ENCODE measurements at regions of chr15 and their contacts with region 1.

Region 1: GRCh38 chr15:85618956-85619491 is 175.7 kb downstream of the KLHL25 start:
- DNase-seq: peak; percentile 33
- H3K4me3 Mint-ChIP-seq: no peak overlapping the region
- H3K27ac Mint-ChIP-seq: no peak overlapping the region
- H3K4me1 Mint-ChIP-seq: peaks cover 31% of the 10 kb centered on the region
- H3K27me3 Mint-ChIP-seq: no peaks in the 10 kb centered on the region

Region 2: DNA sequence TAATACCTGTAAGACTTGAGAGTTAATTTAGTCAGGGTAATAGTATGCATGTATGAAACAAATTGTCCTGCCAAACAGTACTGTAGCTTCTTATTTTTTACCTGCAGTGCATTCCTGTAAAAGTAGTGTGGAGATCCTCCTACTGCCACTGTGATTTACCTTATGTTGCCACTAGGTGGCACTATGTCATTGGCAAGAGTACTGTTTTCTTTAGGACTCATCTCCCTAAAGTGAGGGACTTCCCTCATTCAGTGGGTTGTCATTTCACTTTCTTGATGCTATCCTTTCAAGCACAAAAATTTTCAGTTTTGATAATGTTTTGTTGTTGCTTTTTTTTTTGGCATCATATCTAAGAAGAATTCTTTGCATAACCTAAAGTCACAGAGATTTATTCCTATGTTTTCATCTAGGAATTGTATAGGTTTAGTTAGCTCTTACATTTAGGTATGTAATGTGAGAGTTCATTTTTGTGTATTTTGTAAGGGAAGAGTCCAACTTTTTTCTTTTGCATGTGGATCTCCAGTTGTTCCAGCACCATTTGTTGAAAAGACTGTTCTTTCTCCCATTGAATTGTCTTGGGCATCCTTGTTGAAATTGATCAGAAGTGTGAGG is 133.0 kb before region 1 on chr15:
- intact Hi-C with region 1: loop called (anchors 5 kb)
- DNase-seq: peak; percentile 40
- H3K4me3 Mint-ChIP-seq: no peak overlapping the region
- H3K27ac Mint-ChIP-seq: no peak overlapping the region
- H3K4me1 Mint-ChIP-seq: peaks cover 60% of the 10 kb centered on the region
- H3K27me3 Mint-ChIP-seq: no peaks in the 10 kb centered on the region

Region 3: GRCh38 chr15:85646538-85647091 is 27.6 kb after region 1 on chr15:
- intact Hi-C with region 1: loop called (anchors 2 kb)
- DNase-seq: peak; percentile 20
- H3K4me3 Mint-ChIP-seq: peak overlapping the region; percentile 9
- H3K27ac Mint-ChIP-seq: peak overlapping the region; percentile 89
- H3K4me1 Mint-ChIP-seq: peaks cover 42% of the 10 kb centered on the region
- H3K27me3 Mint-ChIP-seq: no peaks in the 10 kb centered on the region

Region 4: DNA sequence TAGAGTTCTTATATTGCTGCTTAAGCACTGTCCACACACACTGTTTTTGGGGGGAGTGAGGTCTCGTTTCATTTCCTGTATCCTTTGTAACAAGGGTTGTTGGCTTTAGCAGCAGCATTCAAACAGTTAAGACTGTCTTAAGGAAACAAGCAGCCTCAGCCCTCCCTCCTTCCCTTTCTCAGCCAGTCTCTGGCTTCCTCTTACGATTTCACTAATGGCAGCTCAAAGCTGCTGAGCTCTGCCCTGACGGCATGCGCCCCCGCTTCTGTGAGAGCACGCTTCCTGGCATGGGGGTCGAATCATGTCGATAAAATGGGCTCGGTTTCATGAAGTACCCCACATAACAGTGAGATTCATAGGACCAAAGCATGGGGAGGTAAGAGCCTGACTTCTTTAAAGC is 70.7 kb after region 1 on chr15:
- intact Hi-C with region 1: loop called (anchors 5 kb)
- DNase-seq: peak; percentile 64
- H3K4me3 Mint-ChIP-seq: peak overlapping the region; percentile 94
- H3K27ac Mint-ChIP-seq: peak overlapping the region; percentile 100
- H3K4me1 Mint-ChIP-seq: peaks cover 70% of the 10 kb centered on the region
- H3K27me3 Mint-ChIP-seq: no peaks in the 10 kb centered on the region

Region 5: DNA sequence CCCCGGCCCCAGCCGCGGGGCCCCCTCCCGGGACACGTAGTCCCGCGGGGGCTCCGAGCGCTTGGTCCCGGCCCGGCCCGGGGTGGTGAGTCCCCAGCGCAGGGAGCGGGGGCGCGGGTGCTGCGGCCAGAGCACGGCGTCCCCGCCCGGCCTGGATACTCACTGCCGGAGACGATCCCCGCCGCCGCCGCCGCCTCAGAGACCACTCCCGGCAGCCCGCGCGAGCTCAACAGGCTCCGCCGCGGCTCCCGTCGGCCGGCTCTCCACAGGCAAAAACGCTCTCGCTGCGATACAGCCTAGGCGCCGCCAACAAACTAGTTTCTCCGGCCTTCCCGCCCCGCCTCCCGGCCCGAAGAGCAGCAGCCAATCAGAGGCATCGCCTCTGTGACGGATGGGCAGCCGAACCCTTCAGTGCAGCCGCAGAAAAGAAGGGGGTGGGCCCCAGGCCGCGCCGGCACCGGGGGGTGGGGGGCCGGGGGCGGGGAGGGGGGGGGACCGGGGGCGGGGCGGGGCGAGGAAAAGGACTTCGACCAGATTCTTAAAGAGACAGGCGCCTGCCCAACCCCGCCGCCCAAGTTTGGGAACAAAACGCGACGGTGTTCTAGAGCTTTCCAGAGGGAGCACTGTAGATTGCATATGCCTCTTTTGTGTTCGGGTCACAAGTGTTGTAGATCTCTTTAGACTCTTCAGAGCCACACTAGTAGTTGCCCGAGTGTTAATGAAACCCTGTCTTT is 175.7 kb after region 1 on chr15 and contains the start of gene KLHL25:
- intact Hi-C with region 1: loop called (anchors 5 kb)
- DNase-seq: peak; percentile 92
- H3K4me3 Mint-ChIP-seq: peak within 1 kb of the TSS; percentile 89
- H3K27ac Mint-ChIP-seq: peak within 1 kb of the TSS; percentile 82
- H3K4me1 Mint-ChIP-seq: peaks cover 23% of the 10 kb centered on the region
- H3K27me3 Mint-ChIP-seq: no peaks in the 10 kb centered on the region
- total RNA-seq, gene KLHL25: 8.5 and 9.0 TPM in 2 replicates